CD4-positive, alpha-beta T cell (primary cell): ENCODE measurements at regions of chr1 and their contacts with region 1.

Region 1: GRCh38 chr1:165367375-165367993 is 11.0 kb upstream of the LMX1A start:
- DNase-seq: peak; percentile 59 to 84 (median 74)
- ATAC-seq: peak; percentile 65
- H3K4me3 ChIP-seq: no peak overlapping the region
- H3K4me3 Mint-ChIP-seq: no peak overlapping the region
- H3K27ac ChIP-seq: no peak overlapping the region
- H3K27ac Mint-ChIP-seq: no peak overlapping the region
- H3K4me1 ChIP-seq: peaks cover 6% of the 10 kb centered on the region
- H3K4me1 Mint-ChIP-seq: no peaks in the 10 kb centered on the region
- H3K27me3 ChIP-seq: peaks cover 13 to 48% of the 10 kb centered on the region in 2 experiments
- H3K27me3 Mint-ChIP-seq: peaks cover 79% of the 10 kb centered on the region
- CTCF ChIP-seq: peak; percentile 97

Region 2: DNA sequence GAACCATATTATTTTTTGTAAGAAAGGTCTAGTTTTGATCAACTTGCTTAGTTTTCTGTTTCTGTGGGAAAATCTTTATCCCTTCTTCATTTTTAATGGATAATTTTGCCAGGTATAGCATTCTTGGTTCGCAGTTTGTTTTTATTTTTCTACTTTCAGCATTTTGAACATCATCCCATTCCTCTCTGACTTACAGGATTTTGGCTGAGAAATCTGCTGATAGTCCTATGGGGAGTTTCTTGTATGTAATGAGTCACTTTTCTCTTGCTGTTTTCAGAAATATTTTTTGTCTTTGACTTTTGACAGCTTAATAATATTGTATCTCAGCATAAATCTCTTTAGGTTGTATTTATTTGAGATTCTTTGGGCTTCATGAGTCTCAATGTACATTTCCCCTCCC is 419.4 kb before region 1 on chr1:
- CTCF ChIA-PET with region 1: no interaction called
- POLR2A ChIA-PET with region 1: no interaction called
- intact Hi-C with region 1: no loop called
- DNase-seq: no peak
- ATAC-seq: no peak
- H3K4me3 ChIP-seq: no peak overlapping the region
- H3K4me3 Mint-ChIP-seq: no peak overlapping the region
- H3K27ac ChIP-seq: no peak overlapping the region
- H3K27ac Mint-ChIP-seq: no peak overlapping the region
- H3K4me1 ChIP-seq: no peaks in the 10 kb centered on the region
- H3K4me1 Mint-ChIP-seq: no peaks in the 10 kb centered on the region
- H3K27me3 ChIP-seq: no peaks in the 10 kb centered on the region
- H3K27me3 Mint-ChIP-seq: peaks cover 3% of the 10 kb centered on the region
- CTCF ChIP-seq: no peak

Region 3: GRCh38 chr1:165586435-165586834 is 219.0 kb after region 1 on chr1:
- CTCF ChIA-PET with region 1: interaction called, 16 read pairs
- POLR2A ChIA-PET with region 1: no interaction called
- intact Hi-C with region 1: loop called in 1 of 2 experiments (anchors 1 kb)
- DNase-seq: no peak
- ATAC-seq: no peak
- H3K4me3 ChIP-seq: no peak overlapping the region
- H3K4me3 Mint-ChIP-seq: no peak overlapping the region
- H3K27ac ChIP-seq: no peak overlapping the region
- H3K27ac Mint-ChIP-seq: no peak overlapping the region
- H3K4me1 ChIP-seq: no peaks in the 10 kb centered on the region
- H3K4me1 Mint-ChIP-seq: no peaks in the 10 kb centered on the region
- H3K27me3 ChIP-seq: peaks cover 0 to 45% of the 10 kb centered on the region in 2 experiments
- H3K27me3 Mint-ChIP-seq: peaks cover 65% of the 10 kb centered on the region
- CTCF ChIP-seq: no peak